ENCODE measurements at regions of chr12 and their contacts with region 1.

Region 1: GRCh38 chr12:93742110-93742934 is 65.1 kb downstream of the CRADD start:
- DNase-seq: peak in 1 of 2 donors; percentile 52
- ATAC-seq: peak; percentile 75 to 84
- H3K4me3 ChIP-seq: peak overlapping the region; percentile 57 to 69 (median 61)
- H3K27ac ChIP-seq: peak overlapping the region; percentile 75 to 84 (median 76)
- H3K4me1 ChIP-seq: peaks cover 39 to 66% of the 10 kb centered on the region in 2 donors
- H3K27me3 ChIP-seq: no peaks in the 10 kb centered on the region
- CTCF ChIP-seq: peak; percentile 29 to 58 (median 49)
- POLR2A ChIP-seq: no peak

Region 2: GRCh38 chr12:93502802-93503623 is 239.3 kb before region 1 on chr12:
- in situ Hi-C with region 1: loop called in 1 of 4 experiments (anchors 10 kb)
- intact Hi-C with region 1: no loop called
- DNase-seq: no peak
- ATAC-seq: no peak
- H3K4me3 ChIP-seq: no peak overlapping the region
- H3K27ac ChIP-seq: no peak overlapping the region
- H3K4me1 ChIP-seq: no peaks in the 10 kb centered on the region
- H3K27me3 ChIP-seq: no peaks in the 10 kb centered on the region
- CTCF ChIP-seq: peak; percentile 49 to 79 (median 71)
- POLR2A ChIP-seq: no peak

Region 3: GRCh38 chr12:93591137-93591868 is 151.0 kb before region 1 on chr12:
- in situ Hi-C with region 1: loop called in 2 of 4 experiments (anchors 10 to 25 kb)
- intact Hi-C with region 1: no loop called
- DNase-seq: peak; percentile 33 to 67
- ATAC-seq: peak; percentile 74 to 79
- H3K4me3 ChIP-seq: peak overlapping the region; percentile 56 to 80 (median 70)
- H3K27ac ChIP-seq: peak overlapping the region; percentile 65 to 77 (median 72)
- H3K4me1 ChIP-seq: peaks cover 0 to 10% of the 10 kb centered on the region in 2 donors
- H3K27me3 ChIP-seq: peaks cover 0 to 5% (median 0%) of the 10 kb centered on the region in 3 donors
- CTCF ChIP-seq: peak in 1 of 5 experiments; percentile 7
- POLR2A ChIP-seq: peak in 1 of 2 donors; percentile 68

Region 4: GRCh38 chr12:93624595-93625294 is 117.6 kb before region 1 on chr12:
- in situ Hi-C with region 1: no loop called
- intact Hi-C with region 1: no loop called
- DNase-seq: no peak
- ATAC-seq: peak; percentile 85 to 93
- H3K4me3 ChIP-seq: no peak overlapping the region
- H3K27ac ChIP-seq: peak overlapping the region in 3 of 4 donors; percentile 19 to 51 (median 39)
- H3K4me1 ChIP-seq: peaks cover 0 to 7% of the 10 kb centered on the region in 2 donors
- H3K27me3 ChIP-seq: no peaks in the 10 kb centered on the region
- CTCF ChIP-seq: no peak
- POLR2A ChIP-seq: no peak

Region 5: GRCh38 chr12:93677195-93678064 is 64.9 kb before region 1 on chr12 and contains the start of gene CRADD:
- in situ Hi-C with region 1: loop called in 3 of 4 experiments (anchors 5 to 10 kb)
- intact Hi-C with region 1: no loop called
- DNase-seq: peak; percentile 78 to 84
- ATAC-seq: peak; percentile 92 to 96
- H3K4me3 ChIP-seq: peak within 1 kb of the TSS; percentile 71 to 87 (median 84)
- H3K27ac ChIP-seq: peak within 1 kb of the TSS; percentile 95 to 96 (median 96)
- H3K4me1 ChIP-seq: peaks cover 44 to 47% of the 10 kb centered on the region in 2 donors
- H3K27me3 ChIP-seq: no peaks in the 10 kb centered on the region
- CTCF ChIP-seq: no peak
- POLR2A ChIP-seq: peak; percentile 53 to 70
- total RNA-seq, gene CRADD: 19.4 to 28.7 (median 22.6) TPM

Region 6: DNA sequence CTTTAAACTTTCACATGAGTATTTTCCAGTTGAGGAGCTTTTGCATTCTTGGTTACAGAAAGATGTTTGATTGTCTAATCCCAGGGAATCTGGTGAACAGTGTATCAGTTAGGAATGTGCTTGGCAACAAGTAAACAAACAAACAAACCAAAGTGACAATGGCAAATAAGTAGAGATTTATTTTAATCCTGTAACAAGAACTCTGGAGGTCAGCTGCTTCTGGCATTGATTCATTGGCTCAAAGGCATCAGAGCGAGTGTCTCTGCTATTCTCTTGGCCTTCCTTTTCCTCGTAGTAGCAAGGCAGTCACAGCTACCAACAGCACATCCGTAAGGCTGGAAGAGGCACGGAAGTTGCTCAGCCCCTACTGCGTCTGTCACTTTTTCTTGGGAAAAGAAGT is 27.9 kb before region 1 on chr12:
- in situ Hi-C with region 1: no loop called
- intact Hi-C with region 1: loop called (anchors 1 kb)
- DNase-seq: peak; percentile 52 to 54
- ATAC-seq: peak; percentile 86 to 88
- H3K4me3 ChIP-seq: peak overlapping the region in 3 of 4 donors; percentile 13 to 35 (median 29)
- H3K27ac ChIP-seq: peak overlapping the region; percentile 53 to 78 (median 64)
- H3K4me1 ChIP-seq: peaks cover 28 to 41% of the 10 kb centered on the region in 2 donors
- H3K27me3 ChIP-seq: no peaks in the 10 kb centered on the region
- CTCF ChIP-seq: no peak
- POLR2A ChIP-seq: no peak

Region 7: DNA sequence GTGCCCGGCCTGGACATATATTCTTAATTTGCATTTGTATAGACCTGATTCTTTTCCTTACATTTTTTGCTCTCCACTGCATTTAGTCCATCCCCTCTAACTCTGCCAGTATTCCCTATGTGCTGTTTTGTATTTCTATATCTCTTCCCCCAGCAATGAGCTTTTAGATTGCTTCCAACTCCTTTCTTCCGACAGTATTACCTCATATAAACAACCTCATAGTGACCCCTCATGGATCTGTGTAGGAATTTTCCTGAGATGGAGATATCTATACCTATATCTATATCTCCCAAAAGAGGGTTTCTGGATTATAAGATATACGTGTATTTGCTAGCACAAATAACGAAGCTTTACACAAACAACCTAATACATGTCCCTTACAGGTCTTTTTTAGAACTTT is 96.7 kb after region 1 on chr12:
- in situ Hi-C with region 1: no loop called
- intact Hi-C with region 1: no loop called
- DNase-seq: no peak
- ATAC-seq: no peak
- H3K4me3 ChIP-seq: no peak overlapping the region
- H3K27ac ChIP-seq: no peak overlapping the region
- H3K4me1 ChIP-seq: peaks cover 11 to 33% of the 10 kb centered on the region in 2 donors
- H3K27me3 ChIP-seq: no peaks in the 10 kb centered on the region
- CTCF ChIP-seq: no peak
- POLR2A ChIP-seq: no peak

Region 8: DNA sequence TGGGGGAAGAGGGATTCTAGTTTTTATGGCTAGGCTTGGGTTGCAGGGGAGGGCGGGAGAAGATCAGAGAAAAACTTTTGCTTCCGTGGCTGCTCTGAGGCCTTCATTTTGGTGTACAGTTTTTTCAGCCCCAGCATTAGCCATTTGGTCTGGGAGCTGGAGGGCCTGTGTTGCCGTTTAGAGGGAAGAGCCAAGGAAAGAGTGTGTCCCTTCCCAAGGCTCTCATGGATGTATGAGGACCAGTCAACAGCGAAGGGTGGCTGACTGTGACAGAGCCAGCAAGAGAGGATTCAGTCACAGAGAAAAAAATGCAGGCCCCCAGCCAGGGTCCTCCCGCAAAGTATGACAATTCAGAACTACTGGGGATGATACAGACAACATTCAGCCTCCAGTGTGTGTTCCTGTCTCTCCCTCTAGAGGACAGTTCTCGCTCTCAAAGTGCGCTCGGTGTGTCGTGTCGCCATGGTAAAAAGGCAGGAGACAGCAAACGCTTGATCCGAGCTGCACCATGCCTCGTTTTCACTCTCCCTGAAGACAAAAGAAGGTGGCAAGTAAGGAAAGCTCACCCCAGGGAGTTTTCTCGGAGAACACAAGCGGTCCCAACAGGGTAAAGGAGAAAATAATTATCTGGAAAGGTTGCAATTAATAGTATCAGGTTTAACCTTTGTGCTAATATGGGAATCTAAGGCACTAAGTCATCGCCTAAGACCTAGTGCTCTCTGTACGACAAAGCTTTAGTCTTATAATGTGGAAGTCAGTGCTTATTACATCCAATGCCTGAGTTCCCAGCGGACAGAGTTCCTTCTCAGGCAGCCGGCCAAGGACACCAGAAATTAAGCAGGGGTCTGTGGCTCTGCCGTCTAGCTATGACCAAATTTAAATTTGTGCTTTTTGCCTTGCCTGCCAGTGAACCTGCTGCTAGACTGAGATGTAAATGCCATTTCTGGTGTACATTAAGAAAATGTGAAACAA is 248.8 kb after region 1 on chr12:
- in situ Hi-C with region 1: loop called in 1 of 4 experiments (anchors 10 kb)
- intact Hi-C with region 1: no loop called
- DNase-seq: peak; percentile 56 to 62
- ATAC-seq: peak; percentile 96 to 98
- H3K4me3 ChIP-seq: peak overlapping the region in 3 of 4 donors; percentile 5 to 42 (median 20)
- H3K27ac ChIP-seq: peak overlapping the region in 2 of 4 donors; percentile 15 to 62
- H3K4me1 ChIP-seq: peaks cover 6 to 9% of the 10 kb centered on the region in 2 donors
- H3K27me3 ChIP-seq: no peaks in the 10 kb centered on the region
- CTCF ChIP-seq: peak; percentile 29 to 69 (median 35)
- POLR2A ChIP-seq: no peak

Region 9: GRCh38 chr12:94297876-94298505 is 555.7 kb after region 1 on chr12:
- in situ Hi-C with region 1: no loop called
- intact Hi-C with region 1: no loop called
- DNase-seq: no peak
- ATAC-seq: no peak
- H3K4me3 ChIP-seq: no peak overlapping the region
- H3K27ac ChIP-seq: no peak overlapping the region
- H3K4me1 ChIP-seq: peaks cover 0 to 8% of the 10 kb centered on the region in 2 donors
- H3K27me3 ChIP-seq: no peaks in the 10 kb centered on the region
- CTCF ChIP-seq: no peak
- POLR2A ChIP-seq: no peak

Measured in gastrocnemius medialis (tissue), 4 donors.